ENCODE measurements at regions of chr10 and their contacts with region 1.

Region 1: GRCh38 chr10:48623607-48624132 is 18.8 kb upstream of the ARHGAP22 start:
- DNase-seq: peak; percentile 24 to 83 (median 71)
- H3K4me3 ChIP-seq: peak overlapping the region in 2 of 7 experiments; percentile 19 to 31
- H3K27ac ChIP-seq: no peak overlapping the region
- H3K4me1 ChIP-seq: peaks cover 0 to 14% (median 10%) of the 10 kb centered on the region in 4 experiments
- H3K27me3 ChIP-seq: no peaks in the 10 kb centered on the region

Region 2: GRCh38 chr10:48634198-48634983 is 10.7 kb after region 1 on chr10:
- CTCF ChIA-PET with region 1: interaction called, 14 read pairs
- POLR2A ChIA-PET with region 1: no interaction called
- DNase-seq: peak; percentile 87 to 93 (median 92)
- H3K4me3 ChIP-seq: peak overlapping the region in 3 of 7 experiments; percentile 8 to 39 (median 14)
- H3K27ac ChIP-seq: peak overlapping the region in 1 of 2 experiments; percentile 60
- H3K4me1 ChIP-seq: peaks cover 8 to 58% (median 44%) of the 10 kb centered on the region in 4 experiments
- H3K27me3 ChIP-seq: no peaks in the 10 kb centered on the region

Region 3: DNA sequence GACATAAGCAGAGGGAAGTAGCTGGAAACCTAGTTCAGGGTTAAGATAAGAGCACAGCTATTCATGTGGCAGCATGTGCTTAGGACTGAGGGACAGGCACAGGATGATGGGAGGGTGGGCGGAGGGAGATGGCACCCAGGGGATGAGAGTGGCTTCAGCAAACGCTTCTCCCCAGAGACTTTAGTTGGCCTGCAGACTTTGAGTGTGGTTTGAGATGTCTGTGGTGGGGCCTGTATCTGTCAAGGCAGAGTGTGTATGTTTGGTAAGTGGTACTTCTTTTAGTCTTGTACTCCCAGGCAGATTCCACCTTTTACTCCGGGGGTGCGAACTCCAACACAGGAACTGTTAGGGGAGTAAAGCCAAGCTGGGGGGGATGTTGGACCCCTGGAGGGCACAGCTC is 149.9 kb after region 1 on chr10:
- CTCF ChIA-PET with region 1: no interaction called
- POLR2A ChIA-PET with region 1: no interaction called
- DNase-seq: no peak
- H3K4me3 ChIP-seq: no peak overlapping the region
- H3K27ac ChIP-seq: no peak overlapping the region
- H3K4me1 ChIP-seq: no peaks in the 10 kb centered on the region
- H3K27me3 ChIP-seq: no peaks in the 10 kb centered on the region

Measured in common myeloid progenitor, CD34-positive (primary cell).